ENCODE measurements at regions of chr4 and their contacts with region 1.

Region 1: DNA sequence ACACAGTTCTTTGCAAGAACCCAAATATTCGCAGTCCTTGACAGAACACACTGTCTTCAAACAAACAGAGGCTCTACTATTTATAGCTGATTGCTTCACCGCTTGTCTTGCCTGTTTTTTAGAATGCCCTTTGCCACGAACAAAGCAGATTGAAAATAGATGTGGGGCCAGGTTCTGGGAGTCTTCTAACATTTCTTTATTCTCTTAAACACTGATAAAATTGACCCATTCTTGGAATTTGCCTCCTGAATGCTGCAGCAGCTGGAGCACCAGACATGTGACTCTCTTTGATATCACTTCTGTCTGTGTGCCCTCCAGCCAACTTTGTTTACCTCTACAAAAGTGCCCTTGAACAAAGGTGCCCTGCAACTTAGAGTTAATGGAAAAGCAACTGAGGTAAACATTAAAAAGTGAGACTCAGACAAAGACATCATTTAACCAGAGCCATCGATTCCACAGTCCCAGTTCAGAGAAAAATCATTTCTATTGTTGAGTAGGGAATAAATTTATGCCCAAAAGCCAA is 64.2 kb upstream of the SPP1 start:
- DNase-seq: peak; percentile 96
- ATAC-seq: peak; percentile 93
- H3K4me3 ChIP-seq: peak overlapping the region in 2 of 3 experiments; percentile 21 to 39; a peak in 2 of 6 replicates
- H3K27ac ChIP-seq: peak overlapping the region; percentile 82
- H3K4me1 ChIP-seq: peaks cover 78% of the 10 kb centered on the region
- H3K27me3 ChIP-seq: no peaks in the 10 kb centered on the region
- CTCF ChIP-seq: no peak
- EP300 ChIP-seq: peak; percentile 45 to 96; a peak in 3 of 4 replicates
- POLR2A ChIP-seq: no peak
- RAD21 ChIP-seq: no peak

Region 2: DNA sequence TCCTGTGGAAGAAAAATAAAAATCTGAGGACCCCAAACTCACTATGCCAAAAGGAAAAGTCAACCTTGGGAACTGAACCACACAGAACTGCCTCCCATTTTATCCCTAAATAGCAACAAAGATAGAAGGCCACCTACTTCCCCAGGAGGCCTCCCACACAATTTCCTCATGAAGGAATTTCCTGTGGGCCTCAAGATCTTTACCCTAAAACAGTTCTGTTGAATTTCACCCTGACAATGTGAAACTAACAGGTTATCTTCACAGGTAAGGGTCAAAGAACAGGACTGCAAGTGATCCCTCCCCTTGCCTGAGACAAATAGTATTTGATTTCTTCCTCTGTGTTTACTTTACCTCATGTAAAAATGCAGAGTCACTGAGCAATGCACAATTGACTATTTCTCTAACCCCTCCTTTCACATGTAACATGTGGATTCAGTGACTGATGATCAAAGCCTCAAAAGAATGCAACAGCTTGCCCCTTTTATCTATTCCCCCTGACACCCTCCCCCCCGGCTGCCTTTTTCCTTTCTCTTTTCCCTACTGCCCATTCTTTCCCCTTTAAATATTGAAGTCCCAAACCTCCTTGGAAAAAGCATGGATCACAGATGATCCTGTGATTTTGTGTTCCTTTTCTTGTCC is 45.2 kb before region 1 on chr4:
- CTCF ChIA-PET with region 1: no interaction called
- POLR2A ChIA-PET with region 1: interaction called, 23 read pairs
- in situ Hi-C with region 1: no loop called
- intact Hi-C with region 1: loop called (anchors 2 kb)
- DNase-seq: peak; percentile 98
- ATAC-seq: peak; percentile 97
- H3K4me3 ChIP-seq: peak overlapping the region; percentile 9 to 30 (median 17); a peak in 4 of 6 replicates
- H3K27ac ChIP-seq: peak overlapping the region; percentile 90
- H3K4me1 ChIP-seq: peaks cover 88% of the 10 kb centered on the region
- H3K27me3 ChIP-seq: no peaks in the 10 kb centered on the region
- CTCF ChIP-seq: no peak
- EP300 ChIP-seq: peak; percentile 90 to 99; a peak in 3 of 4 replicates
- POLR2A ChIP-seq: no peak; a peak in 1 of 4 replicates
- RAD21 ChIP-seq: no peak

Region 3: DNA sequence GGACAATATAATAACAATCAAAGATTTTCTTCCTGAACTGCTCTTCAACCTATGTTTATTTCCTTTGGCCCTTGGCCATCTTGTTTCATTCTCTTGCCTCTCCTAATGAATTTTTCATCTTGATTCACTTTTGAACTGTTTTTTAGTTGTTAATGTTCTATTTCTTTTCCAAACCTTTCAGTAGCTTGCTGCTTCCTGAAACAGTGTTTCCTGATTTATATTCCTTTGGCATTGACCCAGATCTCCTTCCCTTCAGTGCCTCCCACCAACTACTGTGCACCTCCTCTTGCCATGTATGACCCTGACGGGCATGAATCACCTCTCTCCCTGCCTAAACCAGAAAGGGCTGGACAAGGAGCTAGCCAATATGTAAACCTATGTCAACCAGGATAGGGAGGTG is 38.6 kb after region 1 on chr4:
- CTCF ChIA-PET with region 1: no interaction called
- POLR2A ChIA-PET with region 1: interaction called, 3 read pairs
- in situ Hi-C with region 1: no loop called
- intact Hi-C with region 1: loop called (anchors 5 kb)
- DNase-seq: no peak
- ATAC-seq: no peak
- H3K4me3 ChIP-seq: no peak overlapping the region
- H3K27ac ChIP-seq: no peak overlapping the region
- H3K4me1 ChIP-seq: peaks cover 14% of the 10 kb centered on the region
- H3K27me3 ChIP-seq: no peaks in the 10 kb centered on the region
- CTCF ChIP-seq: no peak
- EP300 ChIP-seq: no peak
- POLR2A ChIP-seq: no peak
- RAD21 ChIP-seq: no peak

Region 4: DNA sequence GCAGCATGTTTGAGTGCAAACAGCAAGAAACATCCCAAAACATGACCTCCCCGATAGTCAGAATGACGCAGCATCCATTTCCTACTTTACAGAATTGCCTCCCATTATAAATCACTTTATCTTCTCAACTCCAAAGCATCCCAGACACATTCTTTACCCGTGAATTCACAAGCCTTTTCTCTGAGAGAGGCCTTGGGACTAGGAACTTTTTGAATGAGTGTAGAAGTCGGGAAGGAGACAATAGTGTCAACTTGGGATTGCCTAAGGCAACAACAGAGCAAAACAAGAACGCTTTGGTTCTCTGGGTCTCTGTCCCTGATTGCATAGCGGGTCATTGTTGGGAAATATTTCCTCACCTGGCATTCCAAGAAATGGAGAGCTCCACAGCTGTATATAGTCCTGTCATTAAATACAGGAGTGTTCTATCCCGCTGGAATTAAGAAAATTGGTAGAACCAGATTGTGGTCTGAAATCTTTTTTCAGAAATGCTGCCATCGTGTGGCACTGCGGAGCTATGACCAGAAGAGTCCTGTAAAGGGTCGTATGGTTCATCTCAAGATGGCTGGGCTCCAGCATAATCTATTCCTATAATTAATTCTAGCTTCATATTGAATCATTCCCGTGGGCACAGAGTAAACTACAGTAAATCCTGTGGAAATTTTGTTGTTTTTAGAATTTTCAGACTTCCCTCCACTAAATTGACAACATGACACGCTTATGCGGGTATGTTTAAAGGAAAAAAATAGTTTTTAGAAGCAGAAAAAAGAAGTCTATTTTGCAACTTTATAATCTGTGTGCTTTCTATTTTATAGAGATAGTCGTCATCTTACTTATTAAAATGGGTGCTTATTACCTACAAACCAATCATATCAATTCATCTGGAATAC is 62.2 kb after region 1 on chr4:
- CTCF ChIA-PET with region 1: no interaction called
- POLR2A ChIA-PET with region 1: no interaction called
- in situ Hi-C with region 1: no loop called
- intact Hi-C with region 1: loop called (anchors 1 kb)
- DNase-seq: peak; percentile 63
- ATAC-seq: peak; percentile 77
- H3K4me3 ChIP-seq: peak overlapping the region in 2 of 3 experiments; percentile 24 to 26; a peak in 2 of 6 replicates
- H3K27ac ChIP-seq: no peak overlapping the region
- H3K4me1 ChIP-seq: peaks cover 64% of the 10 kb centered on the region
- H3K27me3 ChIP-seq: no peaks in the 10 kb centered on the region
- CTCF ChIP-seq: peak; percentile 79
- EP300 ChIP-seq: no peak
- POLR2A ChIP-seq: no peak
- RAD21 ChIP-seq: peak; percentile 73